Activated CD4-positive, alpha-beta T cell treated with anti-CD3 and anti-CD28 coated beads for 36 hours (primary cell): ENCODE measurements at regions of chr4 and their contacts with region 1.

Region 1: DNA sequence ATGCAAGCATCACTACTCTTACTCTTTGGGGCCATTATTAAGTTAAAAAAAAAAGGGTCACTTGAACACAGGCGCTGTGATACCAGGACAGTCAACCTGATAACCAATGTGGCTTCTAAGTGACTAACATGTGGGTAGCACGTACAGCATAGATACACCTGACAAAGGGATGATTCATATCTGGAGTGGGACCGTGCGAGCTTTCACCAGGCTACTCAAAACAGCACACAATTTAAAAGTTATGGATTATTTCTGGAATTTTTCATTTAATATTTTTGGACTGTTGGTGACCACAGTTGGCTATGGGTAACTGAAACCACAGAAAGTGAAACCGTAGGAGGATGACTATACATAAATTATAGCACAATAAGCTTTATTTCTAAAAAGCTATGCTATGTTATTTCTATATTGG is 113.8 kb upstream of the STIM2 start:
- DNase-seq: peak; percentile 69
- ATAC-seq: peak; percentile 100
- H3K4me3 Mint-ChIP-seq: no peak overlapping the region
- H3K27ac Mint-ChIP-seq: no peak overlapping the region
- H3K4me1 Mint-ChIP-seq: peaks cover 14% of the 10 kb centered on the region
- H3K27me3 Mint-ChIP-seq: no peaks in the 10 kb centered on the region

Region 2: GRCh38 chr4:26522478-26522877 is 224.3 kb before region 1 on chr4:
- CTCF ChIA-PET with region 1: no interaction called
- POLR2A ChIA-PET with region 1: no interaction called
- intact Hi-C with region 1: no loop called
- DNase-seq: no peak
- ATAC-seq: no peak
- H3K4me3 Mint-ChIP-seq: no peak overlapping the region
- H3K27ac Mint-ChIP-seq: no peak overlapping the region
- H3K4me1 Mint-ChIP-seq: no peaks in the 10 kb centered on the region
- H3K27me3 Mint-ChIP-seq: peaks cover 8% of the 10 kb centered on the region

Region 3: DNA sequence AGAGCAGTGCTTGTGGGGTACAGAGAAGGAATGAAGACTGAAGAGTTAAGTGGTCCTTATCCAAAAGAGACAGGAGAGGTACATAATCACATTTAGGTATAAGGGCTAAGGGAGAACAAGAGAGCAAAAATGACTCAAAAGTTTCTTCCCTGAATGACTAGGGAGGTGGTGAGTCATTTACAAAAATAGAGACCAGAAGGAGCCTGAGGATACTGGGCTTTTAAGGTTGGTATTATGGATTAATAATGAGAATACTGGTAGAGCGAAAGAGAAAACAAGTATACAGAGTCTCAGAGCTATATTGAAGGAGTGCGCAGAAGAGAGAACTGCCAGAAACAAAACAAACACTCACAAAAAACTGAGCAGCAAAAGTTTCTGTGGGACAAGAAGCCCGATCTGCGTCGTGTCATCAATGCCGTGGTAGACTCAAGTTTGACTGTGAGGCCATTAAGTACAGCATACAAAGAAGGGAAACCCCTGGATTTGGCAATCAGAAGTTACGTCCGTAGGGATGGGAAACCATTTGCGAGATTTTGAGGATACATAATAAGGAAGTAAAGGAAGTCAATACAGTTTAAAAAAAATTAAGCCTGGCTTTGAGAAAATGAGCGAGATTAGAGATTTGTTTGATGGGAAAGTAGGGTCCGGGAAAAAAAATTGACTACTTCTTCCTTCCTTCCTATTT is 15.3 kb before region 1 on chr4:
- CTCF ChIA-PET with region 1: no interaction called
- POLR2A ChIA-PET with region 1: no interaction called
- intact Hi-C with region 1: loop called (anchors 1 kb)
- DNase-seq: peak; percentile 11
- ATAC-seq: peak; percentile 96
- H3K4me3 Mint-ChIP-seq: no peak overlapping the region
- H3K27ac Mint-ChIP-seq: peak overlapping the region; percentile 42
- H3K4me1 Mint-ChIP-seq: peaks cover 11% of the 10 kb centered on the region
- H3K27me3 Mint-ChIP-seq: no peaks in the 10 kb centered on the region